T-cell (primary cell): ENCODE measurements at regions of chr3 and their contacts with region 1.

Region 1: DNA sequence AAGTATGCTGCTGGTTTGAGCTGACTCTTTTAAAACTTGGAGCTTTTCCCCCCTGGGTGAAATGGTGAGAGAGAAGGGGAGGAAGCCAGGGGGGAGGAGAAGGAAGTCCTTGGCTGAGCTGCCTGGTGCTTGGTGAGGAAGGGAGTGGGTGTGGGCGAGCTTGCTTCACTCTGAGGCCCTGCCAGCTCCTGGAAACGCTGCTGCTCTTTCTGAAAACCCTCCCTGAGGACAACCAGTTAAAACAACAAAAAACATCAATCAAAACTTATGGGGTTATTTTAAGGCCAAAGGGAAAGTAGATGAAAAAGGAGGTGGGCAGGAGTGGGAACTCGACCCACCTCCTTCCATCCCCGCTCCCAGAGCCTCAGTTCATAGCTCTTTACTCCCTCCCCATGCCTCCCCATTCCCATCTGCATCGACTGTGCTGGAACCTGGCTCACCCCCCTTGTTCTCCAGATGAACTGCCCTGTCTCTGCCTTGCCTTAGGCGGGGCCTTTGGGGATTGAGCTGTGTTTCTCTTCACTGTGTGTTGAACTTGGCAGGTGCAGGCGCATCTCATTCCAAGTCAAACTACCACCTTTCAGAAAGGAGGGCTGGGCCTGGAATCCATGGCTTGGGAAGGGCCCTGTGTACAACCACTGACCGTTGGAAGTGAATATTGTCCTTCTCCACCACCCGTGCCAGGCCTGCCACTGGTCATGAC is 166.1 kb downstream of the ZNF621 start:
- DNase-seq: no peak
- ATAC-seq: no peak
- H3K4me3 ChIP-seq: no peak overlapping the region
- H3K4me3 Mint-ChIP-seq: no peak overlapping the region
- H3K27ac ChIP-seq: no peak overlapping the region
- H3K27ac Mint-ChIP-seq: no peak overlapping the region
- H3K4me1 ChIP-seq: no peaks in the 10 kb centered on the region
- H3K4me1 Mint-ChIP-seq: no peaks in the 10 kb centered on the region
- H3K27me3 ChIP-seq: peaks cover 0 to 16% of the 10 kb centered on the region in 2 experiments
- H3K27me3 Mint-ChIP-seq: peaks cover 16 to 27% of the 10 kb centered on the region in 2 donors

Region 2: GRCh38 chr3:40387001-40387894 is 303.7 kb before region 1 on chr3 and contains the start of gene ENTPD3:
- CTCF ChIA-PET with region 1: no interaction called
- POLR2A ChIA-PET with region 1: no interaction called
- DNase-seq: peak in 29 of 35 experiments; percentile 2 to 46 (median 21)
- ATAC-seq: peak; percentile 80 to 92 (median 88)
- H3K4me3 ChIP-seq: peak within 1 kb of the TSS; percentile 19 to 56
- H3K4me3 Mint-ChIP-seq: peak within 1 kb of the TSS; percentile 58 to 66 (median 62)
- H3K27ac ChIP-seq: no peak within 1 kb of the TSS
- H3K27ac Mint-ChIP-seq: no peak within 1 kb of the TSS
- H3K4me1 ChIP-seq: peaks cover 0 to 8% of the 10 kb centered on the region in 2 experiments
- H3K4me1 Mint-ChIP-seq: peaks cover 7 to 15% (median 12%) of the 10 kb centered on the region in 3 donors
- H3K27me3 ChIP-seq: peaks cover 6 to 28% of the 10 kb centered on the region in 2 experiments
- H3K27me3 Mint-ChIP-seq: peaks cover 36 to 49% of the 10 kb centered on the region in 2 donors
- total RNA-seq, gene ENTPD3: not detected

Region 3: GRCh38 chr3:40532252-40532651 is 158.6 kb before region 1 on chr3:
- CTCF ChIA-PET with region 1: no interaction called
- POLR2A ChIA-PET with region 1: no interaction called
- DNase-seq: no peak
- ATAC-seq: no peak
- H3K4me3 ChIP-seq: no peak overlapping the region
- H3K4me3 Mint-ChIP-seq: no peak overlapping the region
- H3K27ac ChIP-seq: no peak overlapping the region
- H3K27ac Mint-ChIP-seq: no peak overlapping the region
- H3K4me1 ChIP-seq: no peaks in the 10 kb centered on the region
- H3K4me1 Mint-ChIP-seq: peaks cover 0 to 9% (median 2%) of the 10 kb centered on the region in 3 donors
- H3K27me3 ChIP-seq: no peaks in the 10 kb centered on the region
- H3K27me3 Mint-ChIP-seq: no peaks in the 10 kb centered on the region

Region 4: GRCh38 chr3:40780291-40780924 is 89.5 kb after region 1 on chr3:
- CTCF ChIA-PET with region 1: no interaction called
- POLR2A ChIA-PET with region 1: no interaction called
- DNase-seq: no peak
- ATAC-seq: no peak
- H3K4me3 ChIP-seq: no peak overlapping the region
- H3K4me3 Mint-ChIP-seq: no peak overlapping the region
- H3K27ac ChIP-seq: no peak overlapping the region
- H3K27ac Mint-ChIP-seq: no peak overlapping the region
- H3K4me1 ChIP-seq: no peaks in the 10 kb centered on the region
- H3K4me1 Mint-ChIP-seq: no peaks in the 10 kb centered on the region
- H3K27me3 ChIP-seq: peaks cover 0 to 10% of the 10 kb centered on the region in 2 experiments
- H3K27me3 Mint-ChIP-seq: peaks cover 4 to 16% of the 10 kb centered on the region in 2 donors

Region 5: DNA sequence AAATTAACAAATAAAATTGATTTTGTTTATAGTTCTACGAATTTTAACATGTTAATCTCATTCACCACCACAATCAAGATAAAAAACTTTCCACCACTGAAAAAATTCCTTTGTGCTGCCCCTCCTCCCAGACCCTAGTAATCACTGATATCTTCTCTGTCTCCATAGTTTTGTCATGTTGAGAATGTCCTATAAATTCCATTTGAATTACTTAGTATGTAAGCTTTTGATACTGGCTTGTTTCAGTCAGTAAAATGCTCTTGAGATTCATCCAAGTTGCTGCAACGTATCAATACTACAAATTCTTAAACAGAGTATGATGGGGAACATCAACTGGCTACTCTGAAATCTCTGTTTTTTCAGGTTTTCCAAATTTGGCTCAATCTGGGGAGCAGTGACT is 638.0 kb after region 1 on chr3:
- CTCF ChIA-PET with region 1: no interaction called
- POLR2A ChIA-PET with region 1: interaction called in 1 of 2 experiments, 12 read pairs
- DNase-seq: no peak
- ATAC-seq: no peak
- H3K4me3 ChIP-seq: no peak overlapping the region
- H3K4me3 Mint-ChIP-seq: no peak overlapping the region
- H3K27ac ChIP-seq: no peak overlapping the region
- H3K27ac Mint-ChIP-seq: no peak overlapping the region
- H3K4me1 ChIP-seq: no peaks in the 10 kb centered on the region
- H3K4me1 Mint-ChIP-seq: no peaks in the 10 kb centered on the region
- H3K27me3 ChIP-seq: no peaks in the 10 kb centered on the region
- H3K27me3 Mint-ChIP-seq: no peaks in the 10 kb centered on the region